ENCODE measurements at regions of chr7 and their contacts with region 1.

Region 1: DNA sequence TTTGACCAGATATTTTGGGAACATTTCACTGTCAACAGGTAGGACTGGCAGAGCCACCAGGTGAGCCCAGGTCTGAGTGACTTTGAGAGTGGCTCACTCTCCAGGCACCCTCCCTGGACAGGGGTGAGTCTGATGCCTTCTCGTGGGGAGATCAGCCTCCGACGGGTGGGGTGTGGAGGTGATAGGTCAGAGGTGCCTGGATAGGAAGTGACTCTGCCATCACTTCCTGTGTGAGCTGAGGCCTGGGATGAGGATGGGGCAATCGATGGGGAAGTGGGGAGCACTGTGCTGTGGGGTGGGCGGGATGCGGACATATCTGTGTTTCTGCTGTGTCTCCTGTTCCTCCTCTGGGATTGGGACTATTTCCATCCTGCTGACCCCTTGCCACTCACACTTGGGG is 34.6 kb downstream of the IFT22 start:
- DNase-seq: no peak
- H3K4me3 ChIP-seq: no peak overlapping the region
- H3K27ac ChIP-seq: no peak overlapping the region
- H3K4me1 ChIP-seq: peaks cover 0 to 21% (median 8%) of the 10 kb centered on the region in 4 experiments; a peak in 6 of 7 replicates
- H3K27me3 ChIP-seq: no peaks in the 10 kb centered on the region
- CTCF ChIP-seq: no peak
- EP300 ChIP-seq: no peak
- POLR2A ChIP-seq: no peak
- RAD21 ChIP-seq: no peak

Region 2: GRCh38 chr7:101217388-101218235 is 69.4 kb before region 1 on chr7 and contains the starts of genes PLOD3 and ZNHIT1:
- CTCF ChIA-PET with region 1: interaction called, 12 read pairs
- POLR2A ChIA-PET with region 1: no interaction called
- DNase-seq: peak; percentile 83 to 95
- H3K4me3 ChIP-seq: peak within 1 kb of the TSS; percentile 74 to 83 (median 78)
- H3K27ac ChIP-seq: peak within 1 kb of the TSS; percentile 37; the same call in 1 of the 2 replicates
- H3K4me1 ChIP-seq: peaks cover 0 to 13% (median 7%) of the 10 kb centered on the region in 4 experiments; a peak in 5 of 7 replicates
- H3K27me3 ChIP-seq: no peaks in the 10 kb centered on the region
- CTCF ChIP-seq: peak; percentile 27 to 34 (median 28)
- EP300 ChIP-seq: no peak
- POLR2A ChIP-seq: peak in 1 of 2 experiments; percentile 57; a peak in 2 of 3 replicates
- RAD21 ChIP-seq: peak in 1 of 2 experiments; percentile 28; a peak in 3 of 4 replicates
- total RNA-seq, gene PLOD3: 43.1 and 47.2 TPM in 2 replicates
- total RNA-seq, gene ZNHIT1: 59.9 and 61.7 TPM in 2 replicates

Region 3: GRCh38 chr7:101235050-101235449 is 52.0 kb before region 1 on chr7:
- CTCF ChIA-PET with region 1: interaction called, 51 read pairs
- POLR2A ChIA-PET with region 1: interaction called, 12 read pairs
- DNase-seq: peak in 1 of 2 experiments; percentile 63
- H3K4me3 ChIP-seq: no peak overlapping the region
- H3K27ac ChIP-seq: no peak overlapping the region
- H3K4me1 ChIP-seq: peaks cover 0 to 24% (median 12%) of the 10 kb centered on the region in 4 experiments; a peak in 6 of 7 replicates
- H3K27me3 ChIP-seq: no peaks in the 10 kb centered on the region
- CTCF ChIP-seq: peak in 2 of 3 experiments; percentile 73; a peak in 3 of 4 replicates
- EP300 ChIP-seq: no peak
- POLR2A ChIP-seq: no peak
- RAD21 ChIP-seq: peak; percentile 69 to 78

Region 4: GRCh38 chr7:101251871-101252659 is 35.0 kb before region 1 on chr7:
- CTCF ChIA-PET with region 1: interaction called, 45 read pairs
- POLR2A ChIA-PET with region 1: interaction called, 7 read pairs
- DNase-seq: peak; percentile 94 to 99
- H3K4me3 ChIP-seq: peak overlapping the region; percentile 86 to 98 (median 92)
- H3K27ac ChIP-seq: 0 out of 2 replicates have a peak overlapping the region, but pooled peaks have one; percentile 65
- H3K4me1 ChIP-seq: no peaks in the 10 kb centered on the region
- H3K27me3 ChIP-seq: no peaks in the 10 kb centered on the region
- CTCF ChIP-seq: no peak
- EP300 ChIP-seq: no peak
- POLR2A ChIP-seq: peak in 1 of 2 experiments; percentile 72; a peak in 2 of 3 replicates
- RAD21 ChIP-seq: no peak

Region 5: DNA sequence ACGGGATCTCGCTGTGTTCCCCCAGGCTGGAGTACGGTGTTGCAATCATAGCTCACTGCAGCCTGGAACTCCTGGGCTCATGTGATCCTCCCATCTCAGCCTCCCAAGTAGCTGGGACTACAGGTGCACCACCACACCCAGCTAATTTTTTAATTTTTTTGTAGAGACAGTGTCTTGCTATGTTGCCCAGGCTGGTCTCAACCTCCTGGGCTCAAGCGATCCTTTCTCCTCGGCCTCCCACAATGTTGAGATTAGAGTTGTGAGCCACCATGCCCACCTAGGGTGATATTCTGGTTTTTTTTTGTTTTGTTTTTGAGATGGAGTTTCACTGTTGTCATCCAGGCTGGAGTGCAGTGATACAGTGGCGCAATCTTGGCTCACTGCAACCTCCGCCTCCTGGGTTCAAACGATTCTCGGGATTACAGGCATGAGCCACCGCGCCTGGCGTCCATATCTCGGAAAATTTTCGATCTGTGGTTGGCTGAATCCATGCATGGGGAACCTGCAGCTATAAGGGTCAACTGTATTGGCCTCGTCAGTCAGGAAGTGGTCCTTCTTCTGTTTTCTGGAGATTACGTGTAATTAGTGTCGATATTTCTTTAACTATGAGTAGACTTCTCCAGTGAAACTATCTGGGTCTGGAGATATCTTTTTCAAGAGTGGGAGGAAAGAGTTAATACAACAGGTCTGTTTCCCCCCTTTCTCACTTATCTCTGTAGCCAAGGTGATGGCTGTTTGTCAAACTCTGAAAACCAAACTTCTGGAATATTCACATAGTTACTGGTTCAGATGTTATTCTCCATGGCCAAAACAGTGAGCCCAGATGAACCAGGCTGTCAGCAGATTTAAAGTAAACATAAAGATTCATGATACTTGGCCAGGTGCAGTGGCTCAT is 21.2 kb before region 1 on chr7:
- CTCF ChIA-PET with region 1: interaction called, 12 read pairs
- POLR2A ChIA-PET with region 1: interaction called, 4 read pairs
- DNase-seq: no peak
- H3K4me3 ChIP-seq: no peak overlapping the region
- H3K27ac ChIP-seq: no peak overlapping the region
- H3K4me1 ChIP-seq: peaks cover 0 to 3% (median 0%) of the 10 kb centered on the region in 4 experiments; a peak in 1 of 7 replicates
- H3K27me3 ChIP-seq: no peaks in the 10 kb centered on the region
- CTCF ChIP-seq: no peak
- EP300 ChIP-seq: no peak
- POLR2A ChIP-seq: no peak
- RAD21 ChIP-seq: no peak

Region 6: DNA sequence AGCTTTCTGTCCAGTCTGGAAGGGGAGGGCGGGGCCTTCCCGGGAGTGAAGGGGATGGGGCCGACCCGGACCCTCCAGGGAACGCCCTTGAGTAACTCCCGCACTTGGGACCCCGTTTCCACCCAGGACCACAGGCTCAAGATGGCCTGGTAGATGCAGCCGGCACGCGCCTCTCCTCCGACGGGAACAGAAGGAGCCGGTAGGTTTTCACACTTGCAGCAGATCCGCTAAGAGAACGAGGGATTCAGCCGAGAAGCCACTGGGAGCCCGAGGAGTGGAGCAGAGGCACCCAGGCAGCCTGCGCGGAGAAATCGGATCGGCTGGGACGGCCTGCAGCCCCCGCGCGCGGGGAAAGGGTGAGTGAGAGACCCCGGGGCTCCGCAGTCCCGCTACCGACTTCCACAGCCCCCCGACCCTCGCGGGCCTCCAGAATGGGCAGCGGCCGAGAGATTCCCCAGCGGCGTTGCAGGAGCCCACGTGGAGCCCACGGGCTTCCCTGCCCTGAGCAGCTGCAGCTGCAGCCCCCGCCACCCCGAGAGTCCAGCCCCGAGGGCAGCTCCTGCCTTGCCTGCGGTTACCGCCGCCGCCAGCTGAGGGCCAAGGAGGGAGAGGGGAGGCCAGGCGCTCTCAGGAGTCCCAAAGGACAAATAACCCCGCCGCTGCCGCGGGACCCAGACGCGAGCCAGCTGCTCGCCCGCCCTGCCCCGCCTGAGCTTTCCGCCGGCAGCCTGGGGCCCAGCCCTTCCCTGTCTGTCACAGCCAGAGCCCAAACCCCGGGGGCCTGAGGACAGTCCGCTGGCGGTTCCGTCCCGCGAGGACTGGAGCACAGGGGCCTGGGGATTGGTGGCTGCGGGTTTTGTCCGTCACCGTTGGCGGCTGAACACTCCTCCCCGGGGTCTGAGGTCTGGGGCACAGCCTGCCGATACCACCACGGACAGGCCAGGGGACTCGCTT is 12.8 kb after region 1 on chr7:
- CTCF ChIA-PET with region 1: interaction called, 12 read pairs
- POLR2A ChIA-PET with region 1: interaction called, 144 read pairs
- DNase-seq: peak in 1 of 2 experiments; percentile 73
- H3K4me3 ChIP-seq: peak overlapping the region; percentile 69 to 97 (median 74)
- H3K27ac ChIP-seq: peak overlapping the region; percentile 74; the same call in 1 of the 2 replicates
- H3K4me1 ChIP-seq: peaks cover 6 to 18% (median 9%) of the 10 kb centered on the region in 4 experiments
- H3K27me3 ChIP-seq: no peaks in the 10 kb centered on the region
- CTCF ChIP-seq: no peak
- EP300 ChIP-seq: no peak
- POLR2A ChIP-seq: peak; percentile 26 to 64
- RAD21 ChIP-seq: no peak; a peak in 1 of 4 replicates

Measured in H1 (cell line).